ENCODE measurements at regions of chr18 and their contacts with region 1.

Region 1: GRCh38 chr18:46155641-46156051 is 51.5 kb downstream of the HAUS1 start:
- DNase-seq: peak in 8 of 9 donors; percentile 34 to 66 (median 54)
- ATAC-seq: peak; percentile 93
- H3K4me3 ChIP-seq: peak overlapping the region; percentile 8
- H3K4me3 Mint-ChIP-seq: peak overlapping the region; percentile 35 to 84 (median 78)
- H3K27ac ChIP-seq: peak overlapping the region; percentile 63
- H3K27ac Mint-ChIP-seq: peak overlapping the region; percentile 67 to 98 (median 88)
- H3K4me1 ChIP-seq: peaks cover 39 to 84% of the 10 kb centered on the region in 2 donors
- H3K4me1 Mint-ChIP-seq: peaks cover 42 to 88% (median 81%) of the 10 kb centered on the region in 7 donors
- H3K27me3 ChIP-seq: no peaks in the 10 kb centered on the region
- H3K27me3 Mint-ChIP-seq: peaks cover 0 to 3% (median 0%) of the 10 kb centered on the region in 5 donors

Region 2: GRCh38 chr18:45967007-45967706 is 188.5 kb before region 1 on chr18 and contains the start of gene EPG5:
- CTCF ChIA-PET with region 1: no interaction called
- POLR2A ChIA-PET with region 1: no interaction called
- intact Hi-C with region 1: no loop called
- DNase-seq: peak; percentile 73 to 91 (median 90)
- ATAC-seq: peak; percentile 98
- H3K4me3 ChIP-seq: peak within 1 kb of the TSS; percentile 79
- H3K4me3 Mint-ChIP-seq: peak within 1 kb of the TSS; percentile 94 to 100 (median 97)
- H3K27ac ChIP-seq: peak within 1 kb of the TSS; percentile 86
- H3K27ac Mint-ChIP-seq: peak within 1 kb of the TSS; percentile 84 to 98 (median 97)
- H3K4me1 ChIP-seq: peaks cover 14 to 25% of the 10 kb centered on the region in 2 donors
- H3K4me1 Mint-ChIP-seq: peaks cover 33 to 55% (median 47%) of the 10 kb centered on the region in 7 donors
- H3K27me3 ChIP-seq: no peaks in the 10 kb centered on the region
- H3K27me3 Mint-ChIP-seq: no peaks in the 10 kb centered on the region
- total RNA-seq, gene EPG5: 26.0 to 54.8 (median 44.7) TPM

Region 3: GRCh38 chr18:45998244-45998643 is 157.4 kb before region 1 on chr18:
- CTCF ChIA-PET with region 1: no interaction called
- POLR2A ChIA-PET with region 1: no interaction called
- intact Hi-C with region 1: no loop called
- DNase-seq: peak in 7 of 9 donors; percentile 8 to 38 (median 26)
- ATAC-seq: peak; percentile 76
- H3K4me3 ChIP-seq: peak overlapping the region; percentile 61
- H3K4me3 Mint-ChIP-seq: peak overlapping the region; percentile 63 to 83 (median 78)
- H3K27ac ChIP-seq: peak overlapping the region; percentile 65
- H3K27ac Mint-ChIP-seq: peak overlapping the region; percentile 76 to 94 (median 87)
- H3K4me1 ChIP-seq: peaks cover 0 to 44% of the 10 kb centered on the region in 2 donors
- H3K4me1 Mint-ChIP-seq: peaks cover 20 to 62% (median 52%) of the 10 kb centered on the region in 7 donors
- H3K27me3 ChIP-seq: no peaks in the 10 kb centered on the region
- H3K27me3 Mint-ChIP-seq: peaks cover 0 to 2% (median 0%) of the 10 kb centered on the region in 5 donors

Region 4: GRCh38 chr18:46097801-46098615 is 57.6 kb before region 1 on chr18 and contains the start of gene ATP5F1A:
- CTCF ChIA-PET with region 1: no interaction called
- POLR2A ChIA-PET with region 1: no interaction called
- intact Hi-C with region 1: loop called in 1 of 2 experiments (anchors 5 kb)
- DNase-seq: peak; percentile 69 to 86 (median 80)
- ATAC-seq: peak; percentile 94
- H3K4me3 ChIP-seq: peak within 1 kb of the TSS; percentile 92
- H3K4me3 Mint-ChIP-seq: peak within 1 kb of the TSS; percentile 92 to 99 (median 96)
- H3K27ac ChIP-seq: peak within 1 kb of the TSS; percentile 94
- H3K27ac Mint-ChIP-seq: peak within 1 kb of the TSS; percentile 94 to 99 (median 97)
- H3K4me1 ChIP-seq: peaks cover 18 to 32% of the 10 kb centered on the region in 2 donors
- H3K4me1 Mint-ChIP-seq: peaks cover 18 to 43% (median 35%) of the 10 kb centered on the region in 7 donors
- H3K27me3 ChIP-seq: no peaks in the 10 kb centered on the region
- H3K27me3 Mint-ChIP-seq: peaks cover 0 to 2% (median 0%) of the 10 kb centered on the region in 5 donors
- total RNA-seq, gene ATP5F1A: 181 to 311 (median 212) TPM

Region 5: GRCh38 chr18:46166261-46166970 is 10.8 kb after region 1 on chr18:
- CTCF ChIA-PET with region 1: no interaction called
- POLR2A ChIA-PET with region 1: interaction called, 4 read pairs
- intact Hi-C with region 1: loop called in 1 of 2 experiments (anchors 1 kb)
- DNase-seq: no peak
- ATAC-seq: no peak
- H3K4me3 ChIP-seq: no peak overlapping the region
- H3K4me3 Mint-ChIP-seq: peak overlapping the region in 1 of 10 donors; percentile 17
- H3K27ac ChIP-seq: no peak overlapping the region
- H3K27ac Mint-ChIP-seq: peak overlapping the region in 1 of 9 donors; percentile 70
- H3K4me1 ChIP-seq: peaks cover 0 to 8% of the 10 kb centered on the region in 2 donors
- H3K4me1 Mint-ChIP-seq: peaks cover 13 to 42% (median 29%) of the 10 kb centered on the region in 7 donors
- H3K27me3 ChIP-seq: no peaks in the 10 kb centered on the region
- H3K27me3 Mint-ChIP-seq: no peaks in the 10 kb centered on the region

Region 6: DNA sequence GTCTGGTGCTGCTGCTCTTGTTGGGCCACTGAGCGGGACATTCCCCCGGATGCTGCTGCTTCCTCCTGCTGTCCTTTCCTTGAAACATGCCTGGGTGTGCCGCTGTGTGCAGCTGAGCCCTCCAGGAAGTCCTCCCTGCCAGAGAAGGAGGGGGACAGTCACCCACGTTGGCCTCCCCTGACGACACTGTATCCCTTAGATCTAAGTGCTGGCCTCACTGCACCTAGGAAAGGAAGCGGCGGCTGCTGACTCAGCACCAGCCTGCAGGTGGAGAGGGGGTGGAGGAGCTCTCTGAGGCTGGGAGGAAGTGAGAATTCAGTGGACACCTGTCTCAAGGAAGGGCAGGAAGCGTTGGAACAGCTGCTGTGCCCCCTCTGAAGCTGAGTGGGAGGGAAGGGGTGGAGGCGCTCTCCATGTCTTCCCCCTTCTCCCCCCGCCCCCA is 188.3 kb after region 1 on chr18:
- CTCF ChIA-PET with region 1: no interaction called
- POLR2A ChIA-PET with region 1: no interaction called
- intact Hi-C with region 1: loop called in 1 of 2 experiments (anchors 5 kb)
- DNase-seq: peak; percentile 16 to 59 (median 46)
- ATAC-seq: peak; percentile 89
- H3K4me3 ChIP-seq: no peak overlapping the region
- H3K4me3 Mint-ChIP-seq: peak overlapping the region in 9 of 10 donors; percentile 3 to 75 (median 51)
- H3K27ac ChIP-seq: no peak overlapping the region
- H3K27ac Mint-ChIP-seq: peak overlapping the region; percentile 3 to 86 (median 71)
- H3K4me1 ChIP-seq: peaks cover 6 to 16% of the 10 kb centered on the region in 2 donors
- H3K4me1 Mint-ChIP-seq: peaks cover 21 to 72% (median 25%) of the 10 kb centered on the region in 7 donors
- H3K27me3 ChIP-seq: no peaks in the 10 kb centered on the region
- H3K27me3 Mint-ChIP-seq: peaks cover 0 to 6% (median 3%) of the 10 kb centered on the region in 5 donors

Region 7: DNA sequence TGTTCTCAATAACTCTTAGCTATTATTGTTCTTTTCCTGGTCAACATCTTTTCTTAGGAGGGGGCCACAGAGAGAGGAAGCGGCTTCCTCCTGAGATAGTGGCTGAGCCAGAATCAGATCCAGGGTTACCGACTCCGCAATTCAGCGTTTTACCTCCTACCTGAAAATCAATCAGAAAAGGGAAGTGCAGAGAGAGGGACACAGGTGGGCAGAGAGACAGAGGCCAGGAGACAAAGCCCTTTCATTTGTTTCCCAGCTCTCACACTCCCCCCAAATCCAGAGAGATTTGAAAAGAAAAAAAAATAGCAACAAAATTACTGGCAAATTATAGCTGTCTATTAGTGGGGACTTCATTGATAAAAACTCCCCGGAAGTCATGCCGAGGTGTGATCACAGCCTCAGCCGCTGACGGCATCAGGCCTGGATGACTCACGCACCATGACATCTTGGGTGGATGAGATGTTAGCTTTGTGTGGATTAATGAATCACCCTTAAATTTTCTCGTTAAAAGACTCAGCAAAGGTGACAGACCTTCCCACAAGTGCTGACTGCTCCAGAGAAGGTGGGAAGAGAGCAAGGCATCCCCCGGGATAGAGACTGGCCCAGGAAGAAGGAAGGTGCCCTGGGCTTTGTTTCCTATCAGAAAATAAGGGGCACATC is 380.7 kb after region 1 on chr18:
- CTCF ChIA-PET with region 1: no interaction called
- POLR2A ChIA-PET with region 1: no interaction called
- intact Hi-C with region 1: no loop called
- DNase-seq: no peak
- ATAC-seq: no peak
- H3K4me3 ChIP-seq: no peak overlapping the region
- H3K4me3 Mint-ChIP-seq: no peak overlapping the region
- H3K27ac ChIP-seq: no peak overlapping the region
- H3K27ac Mint-ChIP-seq: no peak overlapping the region
- H3K4me1 ChIP-seq: no peaks in the 10 kb centered on the region
- H3K4me1 Mint-ChIP-seq: peaks cover 0 to under 1% (median 0%) of the 10 kb centered on the region in 7 donors
- H3K27me3 ChIP-seq: no peaks in the 10 kb centered on the region
- H3K27me3 Mint-ChIP-seq: peaks cover 2 to 9% (median 5%) of the 10 kb centered on the region in 5 donors

Measured in naive thymus-derived CD4-positive, alpha-beta T cell (primary cell).